OCI-LY7 (cell line): ENCODE measurements at regions of chr7 and their contacts with region 1.

Region 1: DNA sequence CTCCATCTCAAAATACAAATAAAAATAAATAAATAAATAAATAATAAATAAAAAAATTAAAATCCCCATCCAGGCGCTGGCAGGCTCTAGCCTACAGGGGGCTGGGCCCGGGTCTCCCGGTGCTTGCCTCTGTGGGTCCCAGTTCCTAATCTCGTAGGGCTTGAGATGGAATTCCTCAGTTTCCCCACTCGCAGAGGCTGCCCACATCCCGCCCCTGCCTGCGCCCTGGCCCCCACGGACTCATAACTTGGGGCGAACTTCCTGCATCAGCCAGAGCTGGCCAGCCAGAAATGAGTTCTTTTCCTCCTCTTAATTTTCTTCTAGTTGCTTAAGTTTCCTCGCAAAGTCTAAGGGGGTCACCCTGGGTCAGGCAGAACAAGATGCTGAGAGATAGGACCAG is 22.0 kb upstream of the SRRM3 start:
- DNase-seq: no peak
- H3K4me3 ChIP-seq: no peak overlapping the region
- H3K27ac ChIP-seq: no peak overlapping the region
- H3K4me1 ChIP-seq: no peaks in the 10 kb centered on the region
- CTCF ChIP-seq: no peak

Region 2: GRCh38 chr7:76047811-76048667 is 131.6 kb before region 1 on chr7 and contains the starts of genes MDH2 and STYXL1:
- CTCF ChIA-PET with region 1: no interaction called
- POLR2A ChIA-PET with region 1: no interaction called
- intact Hi-C with region 1: no loop called
- DNase-seq: peak; percentile 96
- H3K4me3 ChIP-seq: peak within 1 kb of the TSS; percentile 96
- H3K27ac ChIP-seq: peak within 1 kb of the TSS; percentile 74
- H3K4me1 ChIP-seq: peaks cover 7% of the 10 kb centered on the region
- CTCF ChIP-seq: no peak
- total RNA-seq, gene MDH2: 110 and 155 TPM in 2 replicates
- total RNA-seq, gene STYXL1: 19.4 and 27.6 TPM in 2 replicates

Region 3: GRCh38 chr7:76262683-76263402 is 83.2 kb after region 1 on chr7:
- CTCF ChIA-PET with region 1: interaction called, 8 read pairs
- POLR2A ChIA-PET with region 1: no interaction called
- intact Hi-C with region 1: loop called (anchors 1 kb)
- DNase-seq: peak; percentile 51
- H3K4me3 ChIP-seq: no peak overlapping the region
- H3K27ac ChIP-seq: no peak overlapping the region
- H3K4me1 ChIP-seq: peaks cover 4% of the 10 kb centered on the region
- CTCF ChIP-seq: peak; percentile 85